HepG2 (cell line): ENCODE measurements at regions of chr6 and their contacts with region 1.

Region 1: DNA sequence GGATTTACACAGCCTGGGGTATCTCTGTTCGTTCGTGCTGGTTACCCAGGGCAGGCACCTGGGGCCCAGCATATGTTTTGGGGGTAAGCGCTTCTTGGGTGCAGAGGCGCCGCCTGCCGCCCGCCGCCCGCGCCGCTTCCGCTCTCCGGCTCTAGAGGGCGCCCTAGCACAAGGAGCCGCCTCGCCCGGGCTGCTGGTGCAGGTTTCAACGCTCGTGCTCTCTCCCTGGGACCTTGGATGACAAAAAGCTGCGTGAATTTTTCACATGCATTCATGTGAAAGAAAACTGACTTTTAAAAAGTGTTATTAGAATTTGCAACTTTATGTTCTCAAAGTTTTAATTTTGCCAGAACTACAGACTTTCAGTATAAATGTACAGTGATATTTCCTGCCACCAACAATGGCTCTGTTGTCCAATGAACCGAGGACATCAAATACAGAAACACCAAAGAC is 32.5 kb downstream of the PRR18 start:
- DNase-seq: peak; percentile 30
- ATAC-seq: peak; percentile 91
- H3K4me3 ChIP-seq: no peak overlapping the region
- H3K27ac ChIP-seq: no peak overlapping the region
- H3K4me1 ChIP-seq: peaks cover 7% of the 10 kb centered on the region; the same call in 1 of the 2 replicates
- H3K27me3 ChIP-seq: peaks cover 9 to 24% of the 10 kb centered on the region in 2 experiments
- CTCF ChIP-seq: peak; percentile 98
- EP300 ChIP-seq: no peak
- POLR2A ChIP-seq: no peak
- RAD21 ChIP-seq: peak; percentile 98

Region 2: DNA sequence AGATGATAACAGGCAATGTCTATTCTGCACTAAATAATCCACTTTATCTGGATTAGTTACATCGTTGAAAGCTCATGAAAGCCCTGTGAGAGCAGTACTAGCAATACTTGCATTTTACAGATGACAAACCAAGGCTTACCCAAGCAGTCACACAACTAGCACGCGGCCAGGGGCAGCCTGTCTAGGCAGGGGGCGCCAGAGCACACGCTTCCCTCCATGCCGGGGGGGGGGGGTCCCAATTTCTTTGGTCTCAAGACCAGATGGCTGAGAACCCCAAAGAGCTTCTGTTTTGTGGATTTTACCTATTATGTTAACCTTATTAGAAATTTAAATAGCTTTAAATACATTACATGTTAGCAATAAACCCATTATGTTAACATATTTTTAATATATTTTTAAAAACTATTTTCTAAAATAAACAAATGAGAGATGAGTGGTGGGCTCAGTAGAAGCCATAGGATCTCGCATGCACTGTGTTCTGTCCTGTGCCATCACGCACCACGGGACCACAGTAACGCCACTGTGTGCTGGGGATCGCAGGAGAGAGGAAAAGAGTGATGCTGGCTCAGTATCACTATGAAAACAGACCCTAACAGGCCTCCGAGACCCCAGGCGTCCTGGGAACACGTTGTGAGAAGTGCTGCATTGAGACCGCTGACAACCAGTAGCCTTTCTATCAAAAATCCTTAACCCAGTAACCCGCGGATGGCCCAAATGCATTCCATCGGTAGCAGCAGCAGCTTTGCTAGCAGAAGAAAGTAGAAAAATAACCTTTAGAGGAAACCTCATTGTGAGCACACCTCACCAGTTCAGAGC is 37.7 kb after region 1 on chr6:
- CTCF ChIA-PET with region 1: no interaction called
- POLR2A ChIA-PET with region 1: no interaction called
- in situ Hi-C with region 1: no loop called
- intact Hi-C with region 1: loop called (anchors 2 kb)
- DNase-seq: peak; percentile 41
- ATAC-seq: peak; percentile 65
- H3K4me3 ChIP-seq: no peak overlapping the region
- H3K27ac ChIP-seq: no peak overlapping the region
- H3K4me1 ChIP-seq: peaks cover 20% of the 10 kb centered on the region
- H3K27me3 ChIP-seq: peaks cover 7 to 26% of the 10 kb centered on the region in 2 experiments; a peak in 4 of 5 replicates
- CTCF ChIP-seq: peak; percentile 84
- EP300 ChIP-seq: no peak
- POLR2A ChIP-seq: no peak
- RAD21 ChIP-seq: peak; percentile 72

Region 3: DNA sequence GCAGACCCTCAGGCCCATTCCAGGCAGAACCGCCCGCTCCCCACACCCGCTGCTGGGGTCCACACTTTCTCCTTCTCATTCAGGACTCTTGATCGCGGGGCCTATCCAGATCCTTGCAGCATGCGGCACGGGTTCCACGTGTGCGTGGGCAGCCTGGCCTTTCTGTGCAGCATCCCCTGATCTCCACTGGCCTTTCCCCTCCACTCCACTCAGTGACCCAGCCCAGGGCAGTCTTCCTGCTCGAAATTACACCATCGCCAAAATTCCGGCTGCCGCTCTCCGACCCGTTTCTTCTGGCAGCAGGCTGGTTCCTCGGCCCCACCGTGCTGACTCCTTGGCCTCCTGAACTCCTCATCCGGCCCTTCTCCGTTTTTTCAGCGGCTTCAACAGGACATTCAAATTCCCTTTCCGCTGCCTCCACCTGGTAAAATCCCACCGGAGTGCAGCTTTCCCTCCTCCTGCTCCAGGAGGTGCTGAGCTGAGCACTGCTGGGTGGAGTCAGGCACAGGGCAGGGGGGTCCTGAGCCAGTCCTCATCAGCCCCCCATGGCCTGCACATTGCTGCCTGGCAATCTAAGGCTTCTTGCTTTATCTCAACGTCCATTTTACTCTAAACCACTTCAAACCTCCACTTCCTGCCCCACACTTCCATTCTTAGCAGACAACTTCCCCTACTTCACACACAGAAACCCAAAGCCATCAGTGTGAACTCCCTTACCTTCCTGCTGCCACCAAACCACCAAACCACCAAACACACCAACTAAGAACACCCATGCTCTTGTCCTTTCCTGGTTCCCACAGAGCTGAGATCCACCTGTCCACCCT is 57.6 kb after region 1 on chr6:
- CTCF ChIA-PET with region 1: no interaction called
- POLR2A ChIA-PET with region 1: no interaction called
- in situ Hi-C with region 1: no loop called
- intact Hi-C with region 1: loop called (anchors 2 kb)
- DNase-seq: no peak
- ATAC-seq: no peak
- H3K4me3 ChIP-seq: no peak overlapping the region
- H3K27ac ChIP-seq: no peak overlapping the region
- H3K4me1 ChIP-seq: peaks cover 36% of the 10 kb centered on the region
- H3K27me3 ChIP-seq: no peaks in the 10 kb centered on the region
- CTCF ChIP-seq: no peak
- EP300 ChIP-seq: no peak
- POLR2A ChIP-seq: no peak
- RAD21 ChIP-seq: no peak

Region 4: DNA sequence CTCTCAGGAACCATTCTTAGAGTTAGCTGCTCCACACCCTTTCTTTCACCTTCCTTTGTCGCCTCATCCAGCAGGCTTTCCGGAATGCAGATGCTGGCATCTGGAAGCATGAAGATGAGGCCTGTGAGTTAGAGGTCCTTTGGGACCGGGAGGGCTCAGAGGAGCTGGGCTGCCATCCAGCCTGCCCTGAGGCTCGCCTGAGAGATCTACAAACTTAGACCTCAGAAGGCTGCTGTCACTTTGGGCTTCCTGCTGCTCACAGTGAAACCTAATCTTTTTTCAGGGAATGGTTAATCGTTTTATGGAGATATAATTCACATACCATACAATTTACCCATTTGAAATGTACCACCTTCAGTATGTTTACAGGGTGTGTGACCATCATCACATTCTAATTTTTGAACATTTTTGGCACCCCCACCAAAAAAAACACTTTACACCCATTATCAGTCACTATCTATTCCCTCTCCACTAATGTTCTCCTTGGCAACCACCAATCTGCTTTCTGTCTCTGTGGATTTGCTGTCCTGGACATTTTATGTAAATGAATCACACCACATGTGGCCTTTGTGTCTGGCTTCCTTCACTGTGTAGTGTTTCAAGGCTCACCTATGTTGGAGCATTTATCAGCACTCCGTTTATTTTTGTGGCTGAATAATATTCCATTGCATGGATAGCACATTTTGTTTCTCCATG is 127.0 kb after region 1 on chr6:
- CTCF ChIA-PET with region 1: interaction called, 52 read pairs
- POLR2A ChIA-PET with region 1: no interaction called
- in situ Hi-C with region 1: loop called (anchors 5 kb)
- intact Hi-C with region 1: loop called (anchors 1 kb)
- DNase-seq: no peak
- ATAC-seq: no peak
- H3K4me3 ChIP-seq: no peak overlapping the region
- H3K27ac ChIP-seq: no peak overlapping the region
- H3K4me1 ChIP-seq: peaks cover 52% of the 10 kb centered on the region
- H3K27me3 ChIP-seq: peaks cover 3 to 38% of the 10 kb centered on the region in 2 experiments
- CTCF ChIP-seq: no peak
- EP300 ChIP-seq: no peak
- POLR2A ChIP-seq: no peak
- RAD21 ChIP-seq: no peak

Region 5: DNA sequence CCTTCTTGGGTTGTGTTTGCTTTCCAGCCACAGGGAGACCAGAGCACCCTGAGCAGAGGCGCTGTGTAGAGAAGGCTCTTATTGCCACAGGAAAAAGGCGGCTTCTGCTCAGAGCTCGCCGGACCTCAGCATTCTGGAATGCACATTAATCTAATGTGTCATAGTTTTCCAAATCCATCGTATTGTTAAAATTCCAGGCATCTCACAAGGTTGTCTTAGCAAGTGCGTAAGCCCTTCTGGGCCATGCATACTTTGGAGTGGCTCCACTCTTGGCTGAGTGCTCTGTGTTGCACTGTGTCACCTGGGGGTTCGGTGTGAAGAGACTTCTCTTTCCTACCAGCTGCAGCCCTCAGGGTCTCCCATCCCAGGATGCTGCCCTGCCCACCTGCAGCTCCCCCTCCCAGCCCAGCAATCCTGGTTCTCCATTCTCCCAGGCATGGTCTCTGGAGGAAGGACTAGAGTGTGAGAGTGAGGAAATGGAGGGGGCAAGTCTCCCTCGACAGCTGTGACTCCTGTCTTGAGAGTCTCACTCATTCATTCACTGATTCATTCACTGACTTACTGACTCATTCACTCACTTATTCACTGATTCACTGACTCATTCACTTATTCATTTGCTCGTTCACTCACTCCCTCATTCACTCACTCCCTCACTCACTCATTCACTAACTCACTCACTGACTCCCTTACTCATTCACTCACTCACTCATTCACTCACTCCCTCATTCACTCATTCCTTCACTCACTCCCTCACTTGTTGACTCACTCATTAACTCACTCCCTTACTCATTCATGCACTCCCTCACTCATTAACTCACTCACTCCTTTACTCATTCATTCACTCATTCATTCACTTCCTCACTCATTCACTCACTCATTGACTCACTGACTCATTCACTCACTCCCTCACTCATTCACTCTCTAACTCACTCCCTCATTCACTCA is 190.7 kb after region 1 on chr6:
- CTCF ChIA-PET with region 1: interaction called, 3 read pairs
- POLR2A ChIA-PET with region 1: no interaction called
- in situ Hi-C with region 1: no loop called
- intact Hi-C with region 1: loop called (anchors 10 kb)
- DNase-seq: no peak
- ATAC-seq: peak; percentile 31
- H3K4me3 ChIP-seq: no peak overlapping the region
- H3K27ac ChIP-seq: no peak overlapping the region
- H3K4me1 ChIP-seq: no peaks in the 10 kb centered on the region
- H3K27me3 ChIP-seq: peaks cover 22 to 91% of the 10 kb centered on the region in 2 experiments; a peak in 4 of 5 replicates
- CTCF ChIP-seq: no peak
- EP300 ChIP-seq: no peak
- POLR2A ChIP-seq: no peak
- RAD21 ChIP-seq: no peak

Region 6: GRCh38 chr6:166592821-166593220 is 317.1 kb after region 1 on chr6:
- CTCF ChIA-PET with region 1: no interaction called
- POLR2A ChIA-PET with region 1: no interaction called
- in situ Hi-C with region 1: no loop called
- intact Hi-C with region 1: loop called (anchors 5 kb)
- DNase-seq: no peak
- ATAC-seq: no peak
- H3K4me3 ChIP-seq: no peak overlapping the region
- H3K27ac ChIP-seq: no peak overlapping the region
- H3K4me1 ChIP-seq: no peaks in the 10 kb centered on the region
- H3K27me3 ChIP-seq: peaks cover 8 to 64% of the 10 kb centered on the region in 2 experiments
- CTCF ChIP-seq: no peak
- EP300 ChIP-seq: no peak
- POLR2A ChIP-seq: no peak
- RAD21 ChIP-seq: no peak